CD14-positive monocyte (primary cell): ENCODE measurements at regions of chr2 and their contacts with region 1.

Region 1: GRCh38 chr2:180125245-180125962 is 118.3 kb upstream of the CWC22 start:
- DNase-seq: peak; percentile 4 to 14 (median 4)
- H3K4me3 ChIP-seq: no peak overlapping the region
- H3K4me3 Mint-ChIP-seq: no peak overlapping the region
- H3K27ac ChIP-seq: no peak overlapping the region
- H3K27ac Mint-ChIP-seq: no peak overlapping the region
- H3K4me1 ChIP-seq: no peaks in the 10 kb centered on the region
- H3K4me1 Mint-ChIP-seq: peaks cover 6% of the 10 kb centered on the region
- H3K27me3 ChIP-seq: peaks cover 2 to 6% of the 10 kb centered on the region in 2 donors
- H3K27me3 Mint-ChIP-seq: peaks cover 3 to 8% (median 6%) of the 10 kb centered on the region in 3 donors
- CTCF ChIP-seq: peak; percentile 34

Region 2: DNA sequence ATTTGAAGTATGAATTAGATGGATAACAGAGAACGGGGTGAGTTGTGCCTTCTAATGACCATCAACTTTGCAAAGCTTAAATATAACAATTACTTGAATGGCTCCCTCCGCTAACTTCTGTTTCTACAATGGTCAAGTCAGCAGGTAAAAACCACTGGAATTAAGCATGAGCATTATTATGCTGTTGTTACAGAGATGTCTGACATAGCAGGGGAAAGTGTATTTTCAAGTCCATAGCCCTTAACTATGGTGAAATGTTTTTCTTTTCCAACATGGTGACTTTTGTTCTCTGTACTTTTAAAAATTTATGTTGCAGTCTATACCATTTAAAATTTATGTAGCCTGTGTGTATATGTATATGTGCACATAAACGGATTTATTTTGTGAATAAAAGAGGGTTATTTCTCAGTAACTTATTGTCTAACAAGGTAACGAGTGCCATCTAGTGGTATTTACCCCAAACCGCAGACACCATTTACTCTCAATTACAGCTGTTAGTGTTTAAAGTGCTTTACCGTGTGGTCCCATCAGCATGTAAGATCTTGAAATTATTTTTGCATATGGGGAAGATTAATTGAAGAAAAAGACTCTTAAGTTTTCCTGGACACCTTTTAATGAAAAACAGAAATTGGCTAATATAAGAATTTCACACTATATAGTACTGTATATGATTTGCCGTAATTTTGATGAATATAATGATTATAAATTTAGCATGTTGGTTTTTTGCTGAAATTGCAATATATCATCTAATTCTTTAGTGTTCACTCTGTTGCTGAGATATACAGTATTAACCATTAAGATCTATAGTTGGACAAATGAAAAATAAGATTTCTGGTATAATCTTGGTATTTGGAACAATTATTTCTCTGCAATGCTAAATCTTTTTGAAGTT is 933.2 kb after region 1 on chr2:
- intact Hi-C with region 1: loop called (anchors 5 to 10 kb)
- DNase-seq: peak; percentile 13 to 51 (median 25)
- H3K4me3 ChIP-seq: no peak overlapping the region
- H3K4me3 Mint-ChIP-seq: no peak overlapping the region
- H3K27ac ChIP-seq: no peak overlapping the region
- H3K27ac Mint-ChIP-seq: no peak overlapping the region
- H3K4me1 ChIP-seq: no peaks in the 10 kb centered on the region
- H3K4me1 Mint-ChIP-seq: peaks cover 4% of the 10 kb centered on the region
- H3K27me3 ChIP-seq: no peaks in the 10 kb centered on the region
- H3K27me3 Mint-ChIP-seq: no peaks in the 10 kb centered on the region
- CTCF ChIP-seq: peak; percentile 83